ENCODE measurements at regions of chr9 and their contacts with region 1.

Region 1: DNA sequence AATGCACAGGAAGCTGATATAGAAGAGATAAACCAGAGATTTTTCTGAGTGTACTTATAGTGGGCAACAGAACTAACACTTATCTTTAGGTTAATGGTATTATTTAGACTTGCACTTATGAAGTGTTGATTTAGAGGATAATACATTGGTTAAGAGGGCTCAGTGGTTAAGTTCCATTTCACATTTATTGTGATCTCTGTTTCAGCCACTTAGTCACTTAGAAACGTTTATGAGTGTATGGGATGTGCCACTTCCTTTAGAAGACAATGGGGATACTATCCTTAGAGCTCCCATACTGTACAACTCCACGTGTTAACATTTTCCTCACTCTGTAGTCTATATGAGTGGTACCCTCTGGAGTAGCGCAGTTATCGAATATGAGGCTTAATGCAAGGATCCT is 57.5 kb downstream of the PIP5K1B start:
- DNase-seq: no peak
- H3K4me3 Mint-ChIP-seq: no peak overlapping the region
- H3K27ac Mint-ChIP-seq: no peak overlapping the region
- H3K4me1 Mint-ChIP-seq: peaks cover 30% of the 10 kb centered on the region
- H3K27me3 Mint-ChIP-seq: peaks cover 3% of the 10 kb centered on the region

Region 2: GRCh38 chr9:68714416-68715180 is 48.0 kb before region 1 on chr9:
- intact Hi-C with region 1: loop called (anchors 5 kb)
- DNase-seq: no peak
- H3K4me3 Mint-ChIP-seq: no peak overlapping the region
- H3K27ac Mint-ChIP-seq: peak overlapping the region; percentile 25
- H3K4me1 Mint-ChIP-seq: peaks cover 61% of the 10 kb centered on the region
- H3K27me3 Mint-ChIP-seq: peaks cover 4% of the 10 kb centered on the region

Region 3: DNA sequence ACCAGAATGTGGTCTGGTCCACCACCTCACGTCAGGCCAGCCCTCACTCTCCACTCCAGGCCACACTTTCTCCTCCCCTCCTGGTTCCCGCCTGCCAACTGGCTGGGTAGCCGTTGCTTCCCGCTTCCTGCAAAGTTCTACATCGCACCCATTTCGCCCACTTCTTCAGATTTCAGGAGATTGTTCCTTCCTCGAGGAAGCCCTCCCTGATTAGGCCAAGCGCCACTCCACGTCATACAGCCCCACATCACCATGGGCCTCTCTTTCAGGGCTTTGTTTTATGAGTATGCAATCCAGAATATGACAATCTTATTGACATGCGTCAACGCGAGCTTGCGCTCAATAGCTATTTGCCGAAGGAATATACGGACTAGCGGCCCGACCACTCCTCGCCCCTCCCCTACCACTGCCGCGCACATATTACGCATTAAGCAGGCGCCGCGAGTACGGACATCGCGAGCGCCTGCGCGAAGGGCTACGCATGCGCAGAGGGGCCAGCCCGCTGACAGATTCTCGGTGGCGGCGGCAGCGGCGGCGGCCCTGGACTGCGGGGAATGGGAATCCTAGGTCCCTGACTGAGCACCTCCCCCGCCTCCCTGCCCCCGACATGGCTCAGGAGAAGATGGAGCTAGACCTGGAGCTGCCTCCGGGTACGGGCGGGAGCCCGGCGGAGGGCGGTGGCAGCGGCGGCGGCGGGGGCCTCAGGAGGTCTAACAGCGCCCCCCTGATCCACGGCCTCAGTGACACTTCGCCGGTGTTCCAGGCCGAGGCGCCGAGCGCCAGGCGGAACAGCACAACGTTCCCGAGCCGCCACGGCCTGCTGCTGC is 17.2 kb after region 1 on chr9:
- intact Hi-C with region 1: loop called (anchors 2 kb)
- DNase-seq: peak; percentile 91
- H3K4me3 Mint-ChIP-seq: no peak overlapping the region
- H3K27ac Mint-ChIP-seq: no peak overlapping the region
- H3K4me1 Mint-ChIP-seq: peaks cover 17% of the 10 kb centered on the region
- H3K27me3 Mint-ChIP-seq: no peaks in the 10 kb centered on the region

Region 4: DNA sequence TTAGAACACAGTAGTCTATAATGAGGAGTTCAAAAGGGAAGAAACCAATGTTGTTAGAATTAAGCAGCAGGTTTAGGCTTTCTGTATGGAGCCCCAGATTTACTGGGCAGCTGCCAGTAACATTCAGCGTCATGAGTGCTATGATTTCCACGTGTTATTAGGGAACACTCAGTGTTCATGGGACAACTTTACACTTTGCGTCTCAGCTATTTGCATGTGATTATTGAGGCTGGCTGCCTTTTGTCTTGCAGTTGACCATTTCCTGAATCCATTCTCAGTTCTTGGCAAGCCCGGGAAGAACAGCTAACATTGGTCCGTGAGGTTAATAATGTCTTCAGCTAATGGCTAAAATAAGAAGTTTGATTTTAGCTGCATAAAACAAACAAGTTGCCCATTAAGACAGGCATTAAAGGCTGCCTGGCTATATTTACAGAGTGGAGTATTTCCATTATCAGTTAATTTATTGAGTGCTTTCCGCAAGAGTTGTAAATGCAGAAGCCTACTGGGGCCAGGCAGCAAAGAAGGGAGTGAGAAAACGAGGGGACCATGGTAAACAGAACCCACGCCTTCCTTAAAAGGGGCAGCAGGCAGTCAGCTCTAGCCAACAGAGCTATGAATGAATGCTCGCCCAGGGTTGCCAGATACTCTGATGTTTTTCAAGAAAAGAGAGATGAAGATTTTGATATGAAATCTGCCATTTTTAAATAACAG is 63.3 kb after region 1 on chr9:
- intact Hi-C with region 1: no loop called
- DNase-seq: no peak
- H3K4me3 Mint-ChIP-seq: no peak overlapping the region
- H3K27ac Mint-ChIP-seq: no peak overlapping the region
- H3K4me1 Mint-ChIP-seq: peaks cover 5% of the 10 kb centered on the region
- H3K27me3 Mint-ChIP-seq: no peaks in the 10 kb centered on the region

Region 5: DNA sequence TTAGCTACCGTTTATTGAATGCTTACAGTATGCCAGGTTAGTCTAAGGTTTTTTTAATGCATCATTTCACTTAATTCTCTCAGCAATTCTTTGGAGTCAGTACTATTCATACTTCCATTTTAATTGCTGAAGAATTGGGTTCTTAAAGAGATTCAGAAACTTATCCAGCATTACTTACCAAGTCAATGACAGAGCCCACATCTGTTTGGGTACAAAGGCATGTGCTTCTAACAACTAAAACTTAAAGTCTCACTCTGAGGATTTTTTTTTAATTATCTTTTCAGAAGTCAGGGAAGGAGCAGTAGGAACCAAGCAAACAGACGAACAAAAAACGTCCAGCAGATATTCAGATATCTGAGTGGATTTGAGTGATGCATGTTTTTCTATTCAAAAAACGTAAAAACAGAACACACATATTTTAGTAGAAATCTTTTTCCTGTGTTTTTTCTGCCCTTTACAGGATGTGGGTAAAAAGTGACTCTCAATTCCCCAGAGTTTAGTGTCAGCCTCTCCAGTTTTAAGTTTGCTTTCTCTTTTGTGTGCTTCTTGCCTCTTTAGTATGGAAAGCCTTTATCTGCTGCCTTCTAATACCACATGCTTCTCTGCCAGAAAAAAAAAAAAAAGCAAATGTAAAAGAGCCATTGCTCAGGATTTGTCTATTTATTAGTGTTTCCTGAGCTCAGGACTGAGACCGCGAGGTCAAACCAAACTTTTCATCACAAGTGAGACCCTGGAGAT is 133.3 kb after region 1 on chr9:
- intact Hi-C with region 1: loop called (anchors 5 kb)
- DNase-seq: no peak
- H3K4me3 Mint-ChIP-seq: peak overlapping the region; percentile 78
- H3K27ac Mint-ChIP-seq: peak overlapping the region; percentile 94
- H3K4me1 Mint-ChIP-seq: peaks cover 57% of the 10 kb centered on the region
- H3K27me3 Mint-ChIP-seq: no peaks in the 10 kb centered on the region

Region 6: DNA sequence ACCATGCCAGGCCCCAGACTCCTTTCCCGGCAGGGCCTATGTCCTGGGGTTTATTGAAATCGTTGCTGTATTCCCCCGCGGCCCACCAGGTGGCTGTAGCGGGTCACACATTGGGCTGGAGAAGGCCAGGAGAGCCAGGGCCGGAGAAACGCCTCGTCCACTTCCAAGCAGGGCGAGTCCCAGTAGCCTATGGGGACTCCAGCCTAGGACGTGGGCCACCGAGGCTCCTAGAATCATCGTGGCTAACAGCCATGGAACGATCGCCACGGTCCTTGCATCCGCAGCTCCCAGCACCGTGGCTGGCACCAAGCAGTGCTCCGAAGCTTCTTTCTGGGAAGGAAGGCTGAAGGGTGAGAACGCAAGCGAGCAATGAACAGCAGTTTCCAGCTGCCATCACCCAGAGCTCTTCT is 650.2 kb after region 1 on chr9:
- intact Hi-C with region 1: no loop called
- DNase-seq: no peak
- H3K4me3 Mint-ChIP-seq: no peak overlapping the region
- H3K27ac Mint-ChIP-seq: no peak overlapping the region
- H3K4me1 Mint-ChIP-seq: no peaks in the 10 kb centered on the region
- H3K27me3 Mint-ChIP-seq: peaks cover 8% of the 10 kb centered on the region